ENCODE measurements at regions of chr12 and their contacts with region 1.

Region 1: DNA sequence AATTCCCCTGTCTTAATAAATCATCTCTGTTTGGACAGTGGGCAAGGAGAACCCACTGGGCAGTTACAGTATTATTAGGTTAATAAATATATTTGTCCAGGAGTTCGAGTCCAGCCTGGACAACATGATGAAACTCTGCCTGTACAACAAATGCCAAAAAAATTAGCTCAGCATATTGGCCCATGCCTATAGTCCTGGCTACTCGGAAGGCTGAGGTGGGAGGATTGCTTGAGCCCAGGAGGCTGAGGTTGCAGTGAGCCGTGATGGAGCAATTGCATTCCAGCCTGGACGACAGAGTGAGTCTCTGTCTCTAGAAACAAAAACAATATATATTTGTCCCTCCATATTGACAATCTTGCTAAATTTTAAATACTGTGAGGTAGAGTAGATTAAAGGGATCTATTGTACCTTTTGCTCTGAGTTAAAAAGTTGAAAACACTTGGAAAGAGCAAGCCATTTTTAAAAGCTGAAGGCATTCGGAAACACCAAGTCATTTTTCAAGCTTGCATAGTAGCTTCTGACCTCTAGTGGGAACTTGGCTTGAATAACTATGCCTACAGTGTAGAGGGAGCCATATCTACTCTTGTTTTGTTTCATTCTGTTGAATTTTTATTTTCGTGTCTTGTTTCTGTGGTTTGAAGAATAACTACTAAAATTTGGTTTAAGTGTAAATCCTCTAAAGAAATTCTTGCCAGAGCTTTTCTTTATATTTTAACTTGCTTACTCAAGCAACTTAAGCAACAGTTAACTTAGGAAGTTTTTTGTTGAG is 14.6 kb upstream of the EEA1 start:
- DNase-seq: no peak
- ATAC-seq: no peak
- H3K4me3 Mint-ChIP-seq: no peak overlapping the region
- H3K27ac Mint-ChIP-seq: no peak overlapping the region
- H3K4me1 Mint-ChIP-seq: no peaks in the 10 kb centered on the region
- H3K27me3 Mint-ChIP-seq: no peaks in the 10 kb centered on the region

Region 2: DNA sequence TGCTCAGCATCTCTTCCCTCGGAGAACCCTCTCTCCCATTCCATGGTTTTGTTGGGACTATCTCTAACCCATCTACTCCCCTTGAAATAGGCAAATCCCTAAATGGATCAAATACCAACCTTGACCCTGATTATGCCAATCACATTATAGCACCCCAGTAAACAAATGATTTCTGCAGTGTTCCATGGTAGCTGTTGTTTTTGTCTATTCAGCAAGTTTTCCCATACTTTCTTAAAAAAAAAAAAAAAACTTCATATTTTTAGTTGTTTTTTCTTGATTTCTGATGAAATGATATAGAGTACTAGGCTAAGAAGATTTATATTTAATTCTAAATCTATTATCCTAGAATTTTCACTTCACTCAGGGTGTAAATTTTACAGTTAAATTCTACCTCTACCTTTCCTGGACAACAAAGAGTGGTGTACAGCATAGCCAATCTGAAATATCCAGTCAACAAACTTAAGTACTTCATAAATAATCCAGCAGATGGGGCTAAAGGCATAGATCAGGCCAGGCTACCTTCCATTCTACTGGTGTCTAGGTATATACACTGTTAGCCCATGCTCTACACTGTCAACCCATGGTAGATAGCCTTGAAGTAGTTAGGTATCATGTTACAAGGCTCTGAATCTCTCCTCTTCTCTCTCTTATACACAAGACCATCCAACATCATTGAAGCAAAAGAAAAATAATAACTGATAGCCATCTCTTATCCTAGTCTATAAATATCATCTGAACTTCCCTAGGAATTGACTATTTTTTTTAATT is 158.7 kb before region 1 on chr12:
- CTCF ChIA-PET with region 1: interaction called, 3 read pairs
- POLR2A ChIA-PET with region 1: no interaction called
- intact Hi-C with region 1: loop called in 1 of 2 experiments (anchors 5 kb)
- DNase-seq: peak; percentile 33
- ATAC-seq: peak; percentile 98
- H3K4me3 Mint-ChIP-seq: no peak overlapping the region
- H3K27ac Mint-ChIP-seq: no peak overlapping the region
- H3K4me1 Mint-ChIP-seq: peaks cover 2% of the 10 kb centered on the region
- H3K27me3 Mint-ChIP-seq: no peaks in the 10 kb centered on the region

Region 3: DNA sequence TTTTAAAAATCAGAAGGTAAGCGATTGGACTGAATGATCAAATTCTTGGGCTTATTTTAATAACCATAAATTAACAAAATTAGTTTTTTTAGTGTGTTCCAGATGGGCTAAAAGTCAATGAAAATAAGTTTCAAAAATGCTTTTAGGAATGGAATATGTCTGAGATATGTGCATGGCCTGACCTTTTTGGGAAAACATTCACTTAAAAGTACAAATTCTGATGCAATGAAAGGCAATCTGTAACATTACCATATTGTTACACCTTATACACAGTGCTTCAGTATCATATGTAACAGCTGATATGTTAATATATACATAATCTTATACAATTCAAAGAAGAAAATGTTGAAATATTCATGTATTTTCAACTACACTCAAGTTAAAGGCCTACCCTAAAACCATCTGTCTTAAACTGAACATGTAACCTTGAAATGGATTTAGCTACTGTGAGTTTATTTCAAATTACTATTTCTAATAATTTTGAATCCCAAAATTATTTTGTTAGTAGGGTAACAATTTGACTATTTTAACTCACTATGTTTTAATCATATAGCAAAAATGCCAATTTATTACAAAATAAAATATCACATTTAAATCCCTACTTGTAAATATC is 99.4 kb before region 1 on chr12:
- CTCF ChIA-PET with region 1: no interaction called
- POLR2A ChIA-PET with region 1: no interaction called
- intact Hi-C with region 1: no loop called
- DNase-seq: no peak
- ATAC-seq: no peak
- H3K4me3 Mint-ChIP-seq: no peak overlapping the region
- H3K27ac Mint-ChIP-seq: no peak overlapping the region
- H3K4me1 Mint-ChIP-seq: peaks cover 1% of the 10 kb centered on the region
- H3K27me3 Mint-ChIP-seq: no peaks in the 10 kb centered on the region

Region 4: GRCh38 chr12:92955997-92956663 is 12.5 kb after region 1 on chr12:
- CTCF ChIA-PET with region 1: no interaction called
- POLR2A ChIA-PET with region 1: no interaction called
- intact Hi-C with region 1: no loop called
- DNase-seq: no peak
- ATAC-seq: no peak
- H3K4me3 Mint-ChIP-seq: no peak overlapping the region
- H3K27ac Mint-ChIP-seq: no peak overlapping the region
- H3K4me1 Mint-ChIP-seq: no peaks in the 10 kb centered on the region
- H3K27me3 Mint-ChIP-seq: no peaks in the 10 kb centered on the region

Region 5: GRCh38 chr12:93317227-93317626 is 373.6 kb after region 1 on chr12:
- CTCF ChIA-PET with region 1: no interaction called
- POLR2A ChIA-PET with region 1: no interaction called
- intact Hi-C with region 1: no loop called
- DNase-seq: peak; percentile 13
- ATAC-seq: peak; percentile 47
- H3K4me3 Mint-ChIP-seq: no peak overlapping the region
- H3K27ac Mint-ChIP-seq: no peak overlapping the region
- H3K4me1 Mint-ChIP-seq: peaks cover 5% of the 10 kb centered on the region
- H3K27me3 Mint-ChIP-seq: no peaks in the 10 kb centered on the region